RWPE1 (cell line): ENCODE measurements at regions of chr20 and their contacts with region 1.

Region 1: GRCh38 chr20:48556956-48557355 is 270.8 kb downstream of the PREX1 start:
- DNase-seq: no peak
- H3K27ac ChIP-seq: no peak overlapping the region
- CTCF ChIP-seq: no peak

Region 2: GRCh38 chr20:47705494-47705856 is 851.5 kb before region 1 on chr20:
- CTCF ChIA-PET with region 1: interaction called, 10 read pairs
- POLR2A ChIA-PET with region 1: no interaction called
- DNase-seq: no peak
- H3K27ac ChIP-seq: peak overlapping the region; percentile 58
- CTCF ChIP-seq: no peak

Region 3: GRCh38 chr20:48383846-48384673 is 172.9 kb before region 1 on chr20:
- CTCF ChIA-PET with region 1: no interaction called
- POLR2A ChIA-PET with region 1: no interaction called
- DNase-seq: peak; percentile 77
- H3K27ac ChIP-seq: no peak overlapping the region
- CTCF ChIP-seq: no peak

Region 4: DNA sequence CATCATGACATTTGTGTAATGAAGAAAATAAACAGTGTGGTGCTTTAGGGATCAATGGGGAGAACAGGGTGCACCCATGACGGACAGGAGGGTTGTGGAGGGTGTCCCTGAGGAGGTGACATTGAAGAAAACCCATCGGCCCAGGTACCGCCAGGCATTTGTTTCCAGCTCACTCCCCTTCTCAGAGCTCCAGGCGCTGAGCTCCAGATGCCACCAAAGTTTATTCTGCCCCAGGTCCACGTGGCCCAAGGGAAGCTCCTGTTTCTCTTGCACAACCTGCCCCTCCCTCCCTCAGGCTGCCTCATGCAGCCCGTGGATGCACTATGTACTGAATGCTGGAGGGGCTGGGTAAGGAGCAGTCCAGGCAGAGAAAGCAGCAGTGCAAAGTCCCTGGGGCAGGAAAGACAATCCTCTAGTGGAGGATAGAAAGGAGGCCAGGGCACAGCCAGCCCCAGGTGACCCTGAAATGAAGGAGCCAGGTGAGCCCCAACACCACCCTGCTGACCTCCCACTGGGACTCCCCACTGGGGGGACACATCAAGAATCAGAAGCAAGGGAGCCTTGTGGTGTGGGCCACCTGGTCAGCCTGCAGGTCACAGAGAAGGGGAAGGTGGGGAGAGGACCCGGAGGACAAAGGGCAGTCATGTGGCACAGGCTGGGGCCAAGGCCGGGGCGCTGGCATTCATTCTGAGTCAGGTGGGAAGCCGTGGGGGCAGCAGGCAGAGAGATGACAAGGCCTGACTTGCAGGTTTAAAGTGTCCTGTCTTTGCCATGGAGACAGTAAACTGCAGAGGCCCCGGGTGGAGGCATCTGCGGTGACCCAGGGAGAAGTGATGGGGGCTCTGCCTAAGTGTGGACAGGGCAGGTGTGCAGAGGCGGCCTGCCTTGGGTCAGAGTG is 40.7 kb after region 1 on chr20:
- CTCF ChIA-PET with region 1: no interaction called
- POLR2A ChIA-PET with region 1: no interaction called
- DNase-seq: no peak
- H3K27ac ChIP-seq: no peak overlapping the region
- CTCF ChIP-seq: no peak